HepG2 (cell line): ENCODE measurements at regions of chr10 and their contacts with region 1.

Region 1: GRCh38 chr10:107814865-107815487 is 650.5 kb upstream of the SORCS1 start:
- DNase-seq: peak; percentile 5
- ATAC-seq: peak; percentile 73
- H3K4me3 ChIP-seq: no peak overlapping the region
- H3K27ac ChIP-seq: no peak overlapping the region
- H3K4me1 ChIP-seq: no peaks in the 10 kb centered on the region
- H3K27me3 ChIP-seq: no peaks in the 10 kb centered on the region
- CTCF ChIP-seq: peak; percentile 56
- EP300 ChIP-seq: no peak
- POLR2A ChIP-seq: no peak
- RAD21 ChIP-seq: no peak

Region 2: DNA sequence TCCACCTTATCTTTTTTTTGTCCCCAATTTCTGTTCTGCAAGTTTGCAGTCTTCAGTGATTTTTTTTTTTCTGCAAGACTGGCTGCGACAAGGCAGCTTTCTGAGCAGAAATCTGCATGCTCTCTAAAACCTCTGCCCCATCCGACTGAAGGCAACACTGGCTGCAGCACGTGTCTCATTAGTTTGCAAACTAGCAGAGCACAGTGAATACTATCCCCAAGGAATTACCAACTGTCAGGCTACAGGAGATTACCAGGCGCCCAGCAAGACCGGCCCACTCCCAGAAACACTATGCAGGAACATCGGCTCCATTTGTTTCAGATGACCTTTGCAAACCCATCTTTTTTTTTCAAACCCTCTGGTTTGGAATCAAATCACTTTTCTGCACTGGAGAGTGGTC is 1189.2 kb before region 1 on chr10:
- CTCF ChIA-PET with region 1: no interaction called
- POLR2A ChIA-PET with region 1: no interaction called
- in situ Hi-C with region 1: no loop called
- intact Hi-C with region 1: loop called (anchors 10 kb)
- DNase-seq: no peak
- ATAC-seq: no peak
- H3K4me3 ChIP-seq: no peak overlapping the region
- H3K27ac ChIP-seq: no peak overlapping the region
- H3K4me1 ChIP-seq: no peaks in the 10 kb centered on the region
- H3K27me3 ChIP-seq: no peaks in the 10 kb centered on the region
- CTCF ChIP-seq: no peak
- EP300 ChIP-seq: no peak
- POLR2A ChIP-seq: no peak
- RAD21 ChIP-seq: no peak

Region 3: DNA sequence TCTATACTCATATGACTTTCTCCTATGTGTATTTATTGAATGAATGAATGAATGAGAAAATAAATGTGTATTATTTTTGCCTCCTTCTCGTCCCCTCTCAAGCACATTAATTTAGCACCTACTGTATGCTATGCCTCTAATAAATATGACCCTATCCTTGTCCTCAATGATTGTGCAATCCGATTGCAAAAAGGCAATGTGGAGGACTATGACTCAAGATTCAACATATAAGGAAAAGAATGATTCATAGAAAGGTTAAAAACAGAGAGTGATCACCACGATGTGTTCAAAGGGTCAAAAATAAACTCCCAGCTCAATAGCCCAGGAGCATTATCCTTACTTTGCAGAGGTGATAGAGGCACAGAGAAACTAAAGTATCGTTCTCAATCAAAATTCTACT is 327.7 kb before region 1 on chr10:
- CTCF ChIA-PET with region 1: no interaction called
- POLR2A ChIA-PET with region 1: no interaction called
- in situ Hi-C with region 1: no loop called
- intact Hi-C with region 1: no loop called
- DNase-seq: no peak
- ATAC-seq: no peak
- H3K4me3 ChIP-seq: no peak overlapping the region
- H3K27ac ChIP-seq: no peak overlapping the region
- H3K4me1 ChIP-seq: no peaks in the 10 kb centered on the region
- H3K27me3 ChIP-seq: no peaks in the 10 kb centered on the region
- CTCF ChIP-seq: no peak
- EP300 ChIP-seq: no peak
- POLR2A ChIP-seq: no peak
- RAD21 ChIP-seq: no peak

Region 4: DNA sequence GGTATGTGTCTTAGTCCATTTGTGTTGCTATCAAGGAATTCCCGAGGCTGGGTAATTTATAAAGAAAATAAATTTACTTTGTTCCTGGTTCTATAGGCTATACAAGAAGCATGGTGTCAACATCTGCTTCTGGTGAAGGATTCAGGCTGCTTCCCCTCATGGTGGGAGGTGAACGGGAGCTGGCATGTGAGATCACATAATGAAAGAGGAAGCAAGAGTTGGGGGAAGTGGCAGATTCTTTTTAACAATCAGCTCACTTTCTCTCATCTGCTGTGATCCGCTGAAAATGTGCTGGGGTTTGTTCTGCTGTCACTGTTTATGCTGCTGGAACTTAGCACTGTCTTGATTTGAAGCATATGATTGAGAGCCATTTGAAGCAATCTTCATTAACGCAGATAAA is 79.5 kb after region 1 on chr10:
- CTCF ChIA-PET with region 1: no interaction called
- POLR2A ChIA-PET with region 1: no interaction called
- in situ Hi-C with region 1: no loop called
- intact Hi-C with region 1: no loop called
- DNase-seq: no peak
- ATAC-seq: no peak
- H3K4me3 ChIP-seq: no peak overlapping the region
- H3K27ac ChIP-seq: no peak overlapping the region
- H3K4me1 ChIP-seq: no peaks in the 10 kb centered on the region
- H3K27me3 ChIP-seq: no peaks in the 10 kb centered on the region
- CTCF ChIP-seq: no peak
- EP300 ChIP-seq: no peak
- POLR2A ChIP-seq: no peak
- RAD21 ChIP-seq: no peak